ENCODE measurements at regions of chr2 and their contacts with region 1.

Region 1: DNA sequence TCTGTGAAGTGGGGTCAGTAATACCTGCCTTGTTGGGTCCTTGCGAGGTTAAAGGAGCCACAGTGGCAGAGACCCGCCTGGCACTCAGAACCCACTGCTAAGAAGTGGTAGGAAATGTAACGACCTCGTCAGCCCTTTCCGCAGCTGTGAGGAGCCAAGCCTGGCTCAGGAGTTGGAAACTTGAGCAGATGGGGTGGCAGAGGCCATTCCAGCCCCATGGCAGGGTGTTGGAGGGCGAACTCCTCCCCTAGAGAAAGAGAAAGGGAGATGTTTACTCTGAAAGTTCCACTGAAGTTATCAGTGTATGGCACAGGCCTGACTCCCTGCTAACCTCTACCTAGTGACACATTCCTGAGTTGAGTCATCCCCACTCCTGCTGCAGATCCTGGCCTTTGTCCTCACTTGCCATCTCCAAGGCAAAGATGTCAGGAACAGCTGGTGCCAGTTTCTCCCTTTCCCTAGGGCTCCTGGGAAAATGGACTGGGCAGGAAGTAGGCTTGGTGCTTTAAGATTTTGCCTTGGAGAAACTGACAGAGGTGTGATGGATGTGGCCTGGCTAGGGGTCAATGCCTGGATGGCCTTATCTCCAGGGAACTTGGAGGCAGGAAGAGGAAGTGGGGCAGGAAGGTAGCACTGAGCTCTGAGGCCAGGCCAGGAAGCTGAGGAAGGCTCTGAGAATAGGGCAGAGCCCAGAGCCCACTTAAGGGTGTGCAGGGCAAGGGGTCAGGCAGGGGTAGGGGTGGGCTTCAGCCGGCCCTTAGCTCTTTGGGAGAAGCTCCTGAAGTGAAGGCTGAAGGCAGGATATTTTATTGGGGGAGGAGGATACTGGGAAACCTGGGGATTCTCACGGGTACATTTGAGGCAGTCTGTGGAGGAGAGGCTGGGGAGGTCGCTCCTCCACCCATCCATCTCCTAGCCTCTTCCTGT is 889 bp downstream of the VAMP5 start:
- DNase-seq: peak; percentile 50
- H3K4me3 Mint-ChIP-seq: peak overlapping the region; percentile 79
- H3K27ac Mint-ChIP-seq: peak overlapping the region; percentile 83
- H3K4me1 Mint-ChIP-seq: peaks cover 40% of the 10 kb centered on the region
- H3K27me3 Mint-ChIP-seq: no peaks in the 10 kb centered on the region

Region 2: DNA sequence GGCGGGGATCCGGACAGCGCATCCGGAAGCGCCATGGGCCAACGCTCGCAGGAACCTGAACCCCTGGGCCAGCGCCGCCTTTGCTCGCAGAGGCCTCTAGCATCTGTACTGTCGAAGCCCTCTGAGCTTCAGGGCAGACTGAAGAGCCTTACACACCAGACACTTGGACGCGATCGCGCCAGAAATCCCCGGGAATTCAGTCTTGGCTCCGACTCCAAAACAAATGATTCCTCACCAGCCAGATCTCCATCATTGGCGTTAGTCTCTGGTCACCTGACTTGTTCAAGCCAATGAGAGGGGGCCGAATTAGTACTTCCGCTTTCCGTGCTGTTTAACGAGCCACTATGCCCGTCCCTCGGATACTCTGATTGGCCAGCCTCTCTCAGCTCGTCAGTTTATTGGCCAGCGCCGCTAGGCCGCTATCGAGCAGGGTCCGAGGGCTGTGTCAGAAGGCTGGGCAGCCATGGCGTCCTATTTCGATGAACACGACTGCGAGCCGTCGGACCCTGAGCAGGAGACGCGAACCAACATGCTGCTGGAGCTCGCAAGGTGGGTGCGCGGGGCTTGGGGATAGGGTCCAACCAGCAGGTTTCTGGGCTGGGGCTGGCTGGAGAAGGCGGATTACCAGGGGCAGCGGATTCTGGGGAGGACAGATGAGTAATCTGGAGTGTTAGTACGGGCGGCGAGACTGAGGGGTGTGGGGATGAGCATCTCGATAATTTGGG is 10.3 kb after region 1 on chr2 and contains the start of gene RNF181:
- CTCF ChIA-PET with region 1: interaction called, 4 read pairs
- intact Hi-C with region 1: loop called (anchors 1 kb)
- DNase-seq: peak; percentile 96
- H3K4me3 Mint-ChIP-seq: peak within 1 kb of the TSS; percentile 97
- H3K27ac Mint-ChIP-seq: peak within 1 kb of the TSS; percentile 92
- H3K4me1 Mint-ChIP-seq: peaks cover 31% of the 10 kb centered on the region
- H3K27me3 Mint-ChIP-seq: no peaks in the 10 kb centered on the region
- total RNA-seq, gene RNF181: 86.8 to 96.1 TPM

Region 3: GRCh38 chr2:85602476-85603234 is 17.5 kb after region 1 on chr2 and contains the start of gene TMEM150A:
- CTCF ChIA-PET with region 1: interaction called, 4 read pairs
- intact Hi-C with region 1: loop called (anchors 1 kb)
- DNase-seq: peak; percentile 86
- H3K4me3 Mint-ChIP-seq: peak within 1 kb of the TSS; percentile 87
- H3K27ac Mint-ChIP-seq: peak within 1 kb of the TSS; percentile 33
- H3K4me1 Mint-ChIP-seq: peaks cover 25% of the 10 kb centered on the region
- H3K27me3 Mint-ChIP-seq: no peaks in the 10 kb centered on the region
- total RNA-seq, gene TMEM150A: 0.55 to 0.67 TPM